Naive thymus-derived CD4-positive, alpha-beta T cell (primary cell): ENCODE measurements at regions of chr5 and their contacts with region 1.

Region 1: DNA sequence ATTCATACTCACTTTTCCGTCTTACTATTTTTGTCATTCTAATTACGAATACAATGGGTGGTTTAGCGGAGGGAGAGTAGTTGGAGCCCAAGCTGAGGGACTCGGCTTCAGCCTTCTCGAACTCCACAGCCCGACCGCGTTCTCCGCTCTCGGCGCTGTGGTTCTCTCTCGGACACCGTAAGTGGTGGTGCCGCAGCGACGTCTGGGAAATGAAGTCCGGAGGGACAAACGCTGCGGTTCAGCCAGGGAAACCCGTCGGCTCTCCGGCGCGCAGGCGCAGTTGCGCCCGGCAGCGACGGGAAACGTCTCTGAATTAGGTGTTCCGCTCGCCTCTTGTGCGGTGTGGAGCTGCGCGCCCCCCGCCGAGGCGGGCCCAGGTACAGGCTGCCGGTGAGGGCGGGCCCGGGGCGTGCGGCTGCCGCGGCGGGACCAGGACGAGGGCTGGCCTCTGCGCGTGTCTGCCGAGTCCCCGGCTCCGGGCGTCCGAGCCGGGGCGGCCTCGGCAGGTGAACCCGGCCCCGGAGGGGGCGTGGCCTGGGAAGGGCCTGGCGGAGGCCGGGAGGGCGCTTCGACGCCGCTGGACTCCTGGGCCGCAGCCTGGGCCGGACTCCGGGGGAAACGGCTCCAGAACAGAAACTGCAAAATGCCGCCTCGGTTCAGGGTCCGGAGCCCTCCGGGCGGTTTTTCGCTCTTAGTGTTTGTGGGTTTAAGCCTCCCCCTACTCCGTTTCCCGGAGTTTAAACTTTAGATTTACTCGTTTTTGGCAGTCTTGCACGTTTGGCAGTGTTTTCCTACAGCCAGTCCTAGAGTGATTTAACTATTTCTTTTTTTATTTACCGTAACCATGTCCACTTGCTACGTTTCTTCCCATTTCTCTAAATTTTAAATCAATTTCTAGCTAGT is at the start of gene ZNF879:
- DNase-seq: peak; percentile 88 to 96 (median 94)
- ATAC-seq: peak; percentile 97
- H3K4me3 ChIP-seq: peak within 1 kb of the TSS; percentile 63
- H3K4me3 Mint-ChIP-seq: peak within 1 kb of the TSS; percentile 87 to 99 (median 95)
- H3K27ac ChIP-seq: peak within 1 kb of the TSS; percentile 75
- H3K27ac Mint-ChIP-seq: peak within 1 kb of the TSS; percentile 77 to 94 (median 90)
- H3K4me1 ChIP-seq: peaks cover 8% of the 10 kb centered on the region in 2 donors
- H3K4me1 Mint-ChIP-seq: peaks cover 5 to 18% (median 13%) of the 10 kb centered on the region in 7 donors
- H3K27me3 ChIP-seq: no peaks in the 10 kb centered on the region
- H3K27me3 Mint-ChIP-seq: peaks cover 0 to 6% (median 5%) of the 10 kb centered on the region in 5 donors
- total RNA-seq, gene ZNF879: 4.2 to 20.0 (median 7.9) TPM

Region 2: GRCh38 chr5:178232124-178232919 is 791.5 kb before region 1 on chr5 and contains the start of gene PHYKPL:
- CTCF ChIA-PET with region 1: no interaction called
- POLR2A ChIA-PET with region 1: no interaction called
- intact Hi-C with region 1: loop called in 1 of 2 experiments (anchors 10 kb)
- DNase-seq: peak; percentile 48 to 78 (median 63)
- ATAC-seq: peak; percentile 81
- H3K4me3 ChIP-seq: peak within 1 kb of the TSS; percentile 63
- H3K4me3 Mint-ChIP-seq: peak within 1 kb of the TSS; percentile 75 to 90 (median 84)
- H3K27ac ChIP-seq: peak within 1 kb of the TSS; percentile 95
- H3K27ac Mint-ChIP-seq: peak within 1 kb of the TSS; percentile 75 to 92 (median 86)
- H3K4me1 ChIP-seq: peaks cover 29 to 38% of the 10 kb centered on the region in 2 donors
- H3K4me1 Mint-ChIP-seq: peaks cover 38 to 73% (median 58%) of the 10 kb centered on the region in 7 donors
- H3K27me3 ChIP-seq: no peaks in the 10 kb centered on the region
- H3K27me3 Mint-ChIP-seq: no peaks in the 10 kb centered on the region
- total RNA-seq, gene PHYKPL: 107 to 265 (median 176) TPM

Region 3: DNA sequence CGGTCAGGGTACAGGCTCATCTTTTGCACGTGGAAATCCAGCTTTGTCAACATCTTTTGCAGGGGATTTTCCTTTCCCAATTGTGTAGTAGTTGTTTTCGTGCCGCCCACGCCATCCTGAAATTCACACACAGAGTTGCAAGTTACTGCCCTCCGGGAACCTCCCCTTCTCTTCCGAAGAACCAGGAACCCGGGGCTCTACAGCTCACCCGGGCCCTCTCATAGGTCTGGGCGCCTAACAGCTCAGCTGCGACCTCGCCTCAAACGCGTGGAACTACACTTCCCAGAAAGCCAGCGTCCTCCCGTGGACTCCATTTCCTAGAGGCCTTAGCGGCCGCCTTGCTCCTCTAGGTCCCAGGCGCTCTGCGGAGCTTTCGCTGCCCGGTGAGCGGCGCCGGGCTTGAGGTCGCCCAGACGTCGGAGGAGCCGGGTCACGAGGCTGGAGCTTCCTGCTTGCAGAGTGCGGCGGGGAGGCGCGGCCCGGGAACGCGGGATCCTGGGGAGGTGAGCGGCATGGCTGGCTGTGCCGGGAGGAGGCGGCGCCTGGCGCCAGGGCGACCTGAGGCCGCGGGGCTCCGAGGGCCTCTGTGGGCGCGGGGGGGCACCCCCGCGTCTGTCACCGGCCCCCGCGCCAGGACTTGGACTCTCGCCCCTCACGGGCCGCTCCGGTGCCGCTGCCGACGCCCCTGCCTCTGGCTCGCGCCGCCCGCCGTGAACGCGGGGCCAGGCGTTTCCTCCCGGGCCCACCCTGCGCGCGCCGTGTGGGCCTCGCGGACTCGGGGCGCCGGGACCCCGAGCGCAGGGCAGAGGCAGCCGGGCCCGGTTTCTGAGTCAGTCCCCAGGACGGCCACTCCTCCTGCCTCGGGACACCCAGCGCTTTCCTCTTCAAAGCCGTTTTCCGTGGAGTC is 163.9 kb before region 1 on chr5 and contains the start of gene ZNF354B:
- CTCF ChIA-PET with region 1: no interaction called
- POLR2A ChIA-PET with region 1: interaction called, 4 read pairs
- intact Hi-C with region 1: loop called (anchors 1 kb)
- DNase-seq: peak; percentile 64 to 87 (median 81)
- ATAC-seq: peak; percentile 98
- H3K4me3 ChIP-seq: peak within 1 kb of the TSS; percentile 77
- H3K4me3 Mint-ChIP-seq: peak within 1 kb of the TSS; percentile 85 to 95 (median 93)
- H3K27ac ChIP-seq: peak within 1 kb of the TSS; percentile 75
- H3K27ac Mint-ChIP-seq: peak within 1 kb of the TSS; percentile 71 to 95 (median 90)
- H3K4me1 ChIP-seq: peaks cover 5 to 6% of the 10 kb centered on the region in 2 donors
- H3K4me1 Mint-ChIP-seq: peaks cover 22 to 34% (median 30%) of the 10 kb centered on the region in 7 donors
- H3K27me3 ChIP-seq: no peaks in the 10 kb centered on the region
- H3K27me3 Mint-ChIP-seq: peaks cover 0 to 4% (median 2%) of the 10 kb centered on the region in 5 donors
- total RNA-seq, gene ZNF354B: 12.3 to 36.7 (median 14.4) TPM

Region 4: DNA sequence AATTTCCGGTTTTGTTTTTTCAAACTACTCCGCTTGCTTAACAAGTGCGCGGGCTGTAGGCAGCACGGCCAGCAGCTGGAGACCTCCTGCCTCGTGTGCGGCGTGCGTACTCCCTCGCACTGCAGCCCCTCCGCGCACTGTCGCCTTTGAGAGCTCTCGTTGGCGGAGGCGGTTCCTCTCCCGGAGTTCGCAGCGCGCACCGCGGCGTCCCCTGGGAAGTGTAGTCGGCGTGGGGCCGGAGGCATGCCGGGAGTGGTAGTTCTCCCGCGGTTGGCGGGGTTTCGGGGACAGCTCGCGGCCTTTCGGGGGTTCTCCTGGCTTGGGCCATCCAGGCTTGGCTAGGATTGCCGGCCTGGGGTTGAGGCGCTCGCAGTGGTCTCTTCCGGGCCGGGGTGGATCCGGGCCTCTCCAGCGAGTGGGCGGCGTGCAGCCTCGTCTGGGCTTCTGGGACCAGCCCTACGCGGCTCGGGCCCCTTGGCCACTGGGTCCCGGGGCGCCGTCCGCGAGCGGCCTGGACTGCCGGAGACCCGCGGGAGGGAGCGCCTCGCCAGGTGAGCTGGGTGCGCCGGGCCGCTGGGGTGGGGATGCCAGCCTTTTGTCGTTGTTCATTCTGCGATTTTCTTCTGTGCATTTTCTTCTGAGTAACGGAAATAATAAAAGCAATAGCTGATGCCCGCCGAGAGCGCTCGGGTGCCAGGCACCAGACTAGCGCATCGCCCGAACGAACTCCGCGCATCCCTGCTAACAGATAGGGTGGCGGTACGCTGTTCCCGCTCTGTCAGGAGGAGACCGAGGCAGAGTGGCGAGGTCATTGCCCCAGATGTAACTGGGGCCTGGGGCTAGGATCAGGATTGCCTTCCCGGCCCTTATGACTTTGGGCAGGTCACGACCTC is 36.6 kb after region 1 on chr5 and contains the start of gene ZNF354C:
- CTCF ChIA-PET with region 1: interaction called, 3 read pairs
- POLR2A ChIA-PET with region 1: interaction called, 22 read pairs
- intact Hi-C with region 1: loop called (anchors 1 kb)
- DNase-seq: peak; percentile 77 to 87 (median 82)
- ATAC-seq: peak; percentile 98
- H3K4me3 ChIP-seq: peak within 1 kb of the TSS; percentile 73
- H3K4me3 Mint-ChIP-seq: peak within 1 kb of the TSS; percentile 89 to 99 (median 94)
- H3K27ac ChIP-seq: peak within 1 kb of the TSS; percentile 79
- H3K27ac Mint-ChIP-seq: peak within 1 kb of the TSS; percentile 82 to 96 (median 92)
- H3K4me1 ChIP-seq: peaks cover 0 to 9% of the 10 kb centered on the region in 2 donors
- H3K4me1 Mint-ChIP-seq: peaks cover 16 to 43% (median 32%) of the 10 kb centered on the region in 7 donors
- H3K27me3 ChIP-seq: no peaks in the 10 kb centered on the region
- H3K27me3 Mint-ChIP-seq: peaks cover 0 to 9% (median 5%) of the 10 kb centered on the region in 5 donors
- total RNA-seq, gene ZNF354C: 3.8 to 12.3 (median 5.2) TPM

Region 5: DNA sequence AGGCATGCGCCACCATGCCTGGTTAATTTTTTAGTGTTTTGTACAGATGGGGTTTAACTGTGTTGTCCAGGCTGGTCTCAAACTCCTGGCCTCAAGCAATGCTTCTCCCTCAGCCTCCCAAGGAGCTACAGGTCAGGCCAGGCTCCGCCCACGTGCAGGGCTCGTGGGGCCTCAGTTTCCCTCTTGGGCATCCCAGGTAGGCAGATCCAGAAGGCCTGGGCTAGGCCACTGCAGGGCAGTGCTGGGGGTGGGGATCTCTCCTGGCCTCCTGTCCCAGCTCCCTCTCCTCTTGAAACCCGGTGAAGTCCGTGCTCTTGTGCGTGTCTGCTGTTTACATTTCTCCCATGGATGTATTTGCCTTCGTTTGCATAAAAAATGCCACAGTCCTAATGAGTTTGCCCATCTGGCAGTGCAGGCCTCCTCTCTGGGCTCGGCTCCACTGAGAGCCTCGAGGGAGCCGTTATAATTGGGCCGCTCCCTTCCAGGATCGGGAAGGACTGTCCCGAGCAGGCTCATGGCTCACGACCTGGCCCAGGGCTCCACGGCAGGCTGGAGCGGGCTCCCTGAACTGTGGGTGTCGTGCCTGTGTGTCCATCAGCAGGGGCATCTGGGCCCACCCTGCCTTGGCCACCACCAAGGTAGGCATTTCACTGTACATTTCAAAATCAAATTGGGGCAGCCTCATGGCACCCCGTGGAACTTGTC is 474.0 kb after region 1 on chr5:
- CTCF ChIA-PET with region 1: no interaction called
- POLR2A ChIA-PET with region 1: no interaction called
- intact Hi-C with region 1: no loop called
- DNase-seq: no peak
- ATAC-seq: no peak
- H3K4me3 ChIP-seq: no peak overlapping the region
- H3K4me3 Mint-ChIP-seq: no peak overlapping the region
- H3K27ac ChIP-seq: no peak overlapping the region
- H3K27ac Mint-ChIP-seq: no peak overlapping the region
- H3K4me1 ChIP-seq: no peaks in the 10 kb centered on the region
- H3K4me1 Mint-ChIP-seq: peaks cover 0 to 1% (median 0%) of the 10 kb centered on the region in 7 donors
- H3K27me3 ChIP-seq: no peaks in the 10 kb centered on the region
- H3K27me3 Mint-ChIP-seq: no peaks in the 10 kb centered on the region

Region 6: GRCh38 chr5:179550511-179551230 is 526.9 kb after region 1 on chr5 and contains the start of gene RUFY1:
- CTCF ChIA-PET with region 1: no interaction called
- POLR2A ChIA-PET with region 1: no interaction called
- intact Hi-C with region 1: loop called (anchors 5 kb)
- DNase-seq: peak; percentile 74 to 92 (median 87)
- ATAC-seq: peak; percentile 90
- H3K4me3 ChIP-seq: peak within 1 kb of the TSS; percentile 84
- H3K4me3 Mint-ChIP-seq: peak within 1 kb of the TSS; percentile 94 to 99 (median 96)
- H3K27ac ChIP-seq: peak within 1 kb of the TSS; percentile 87
- H3K27ac Mint-ChIP-seq: peak within 1 kb of the TSS; percentile 91 to 99 (median 98)
- H3K4me1 ChIP-seq: peaks cover 12 to 15% of the 10 kb centered on the region in 2 donors
- H3K4me1 Mint-ChIP-seq: peaks cover 10 to 49% (median 35%) of the 10 kb centered on the region in 7 donors
- H3K27me3 ChIP-seq: no peaks in the 10 kb centered on the region
- H3K27me3 Mint-ChIP-seq: peaks cover 0 to 4% (median 0%) of the 10 kb centered on the region in 5 donors
- total RNA-seq, gene RUFY1: 31.8 to 63.0 (median 52.3) TPM

Region 7: GRCh38 chr5:180935203-180935602 is 1911.4 kb after region 1 on chr5:
- CTCF ChIA-PET with region 1: no interaction called
- POLR2A ChIA-PET with region 1: no interaction called
- intact Hi-C with region 1: no loop called
- DNase-seq: no peak
- ATAC-seq: no peak
- H3K4me3 ChIP-seq: no peak overlapping the region
- H3K4me3 Mint-ChIP-seq: no peak overlapping the region
- H3K27ac ChIP-seq: no peak overlapping the region
- H3K27ac Mint-ChIP-seq: no peak overlapping the region
- H3K4me1 ChIP-seq: no peaks in the 10 kb centered on the region
- H3K4me1 Mint-ChIP-seq: no peaks in the 10 kb centered on the region
- H3K27me3 ChIP-seq: no peaks in the 10 kb centered on the region
- H3K27me3 Mint-ChIP-seq: peaks cover 0 to 52% (median 23%) of the 10 kb centered on the region in 5 donors